A673 (cell line): ENCODE measurements at regions of chr19 and their contacts with region 1.

Region 1: GRCh38 chr19:14889994-14890642 is 4.2 kb upstream of the OR7A17 start:
- DNase-seq: no peak
- H3K4me3 ChIP-seq: no peak overlapping the region
- H3K27ac ChIP-seq: no peak overlapping the region
- H3K4me1 ChIP-seq: no peaks in the 10 kb centered on the region
- H3K27me3 ChIP-seq: peaks cover 42% of the 10 kb centered on the region
- CTCF ChIP-seq: no peak

Region 2: GRCh38 chr19:14786421-14786851 is 103.7 kb before region 1 on chr19:
- CTCF ChIA-PET with region 1: no interaction called
- POLR2A ChIA-PET with region 1: no interaction called
- intact Hi-C with region 1: loop called (anchors 2 kb)
- DNase-seq: peak; percentile 63
- H3K4me3 ChIP-seq: no peak overlapping the region
- H3K27ac ChIP-seq: no peak overlapping the region
- H3K4me1 ChIP-seq: no peaks in the 10 kb centered on the region
- H3K27me3 ChIP-seq: no peaks in the 10 kb centered on the region
- CTCF ChIP-seq: peak; percentile 95

Region 3: GRCh38 chr19:14943601-14944000 is 53.5 kb after region 1 on chr19:
- CTCF ChIA-PET with region 1: no interaction called
- POLR2A ChIA-PET with region 1: no interaction called
- intact Hi-C with region 1: no loop called
- DNase-seq: no peak
- H3K4me3 ChIP-seq: no peak overlapping the region
- H3K27ac ChIP-seq: no peak overlapping the region
- H3K4me1 ChIP-seq: no peaks in the 10 kb centered on the region
- H3K27me3 ChIP-seq: peaks cover 19% of the 10 kb centered on the region
- CTCF ChIP-seq: no peak